Astrocyte of the cerebellum (primary cell): ENCODE measurements at regions of chr2 and their contacts with region 1.

Region 1: GRCh38 chr2:11863513-11864328 is 117.3 kb downstream of the LPIN1 start:
- DNase-seq: peak; percentile 96
- H3K4me3 ChIP-seq: no peak overlapping the region
- CTCF ChIP-seq: peak; percentile 98

Region 2: DNA sequence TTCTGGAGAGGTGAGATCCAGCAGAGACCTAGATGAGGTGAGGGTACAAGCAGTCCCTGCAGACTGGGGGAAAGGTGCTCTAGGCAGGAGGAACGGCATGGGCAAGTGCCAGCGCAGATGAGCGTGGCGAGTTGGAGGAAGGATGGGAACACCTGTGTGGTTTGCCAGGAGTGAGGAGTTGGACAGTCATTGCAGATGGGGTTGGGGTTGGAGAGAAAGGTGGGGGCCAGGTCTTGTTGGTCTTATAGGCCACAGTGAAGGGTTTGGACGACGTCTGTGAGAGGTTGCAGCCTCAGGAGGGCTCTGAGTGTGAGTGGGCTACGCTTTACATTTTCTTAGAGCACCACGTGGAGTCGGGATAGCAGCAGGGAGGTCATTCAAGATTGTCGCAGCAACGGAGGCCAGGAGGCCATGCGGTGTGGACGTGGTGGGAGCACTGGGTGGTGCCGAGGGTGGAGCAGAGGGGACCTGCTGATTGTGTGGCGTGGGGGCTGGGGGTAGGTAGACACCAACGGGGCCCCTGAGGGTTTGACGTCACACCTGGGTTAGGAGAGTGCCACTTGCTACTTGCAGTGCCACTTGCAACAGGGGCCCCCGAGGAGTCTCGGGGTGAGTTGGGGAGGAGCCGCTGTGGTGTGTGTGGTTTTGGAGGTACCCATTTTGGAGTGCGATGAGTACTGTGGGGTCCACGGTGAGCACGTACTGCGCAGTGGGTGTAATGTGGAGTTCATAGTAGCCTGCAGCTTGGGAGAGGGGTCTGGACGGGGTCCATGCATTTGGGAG is 51.1 kb before region 1 on chr2:
- in situ Hi-C with region 1: no loop called
- DNase-seq: no peak
- H3K4me3 ChIP-seq: no peak overlapping the region
- CTCF ChIP-seq: no peak

Region 3: GRCh38 chr2:12169721-12170120 is 306.0 kb after region 1 on chr2:
- in situ Hi-C with region 1: loop called (anchors 25 kb)
- DNase-seq: peak; percentile 60
- H3K4me3 ChIP-seq: no peak overlapping the region
- CTCF ChIP-seq: no peak

Region 4: GRCh38 chr2:12320991-12321641 is 457.4 kb after region 1 on chr2:
- in situ Hi-C with region 1: loop called (anchors 25 kb)
- DNase-seq: peak; percentile 94
- H3K4me3 ChIP-seq: no peak overlapping the region
- CTCF ChIP-seq: peak; percentile 8

Region 5: DNA sequence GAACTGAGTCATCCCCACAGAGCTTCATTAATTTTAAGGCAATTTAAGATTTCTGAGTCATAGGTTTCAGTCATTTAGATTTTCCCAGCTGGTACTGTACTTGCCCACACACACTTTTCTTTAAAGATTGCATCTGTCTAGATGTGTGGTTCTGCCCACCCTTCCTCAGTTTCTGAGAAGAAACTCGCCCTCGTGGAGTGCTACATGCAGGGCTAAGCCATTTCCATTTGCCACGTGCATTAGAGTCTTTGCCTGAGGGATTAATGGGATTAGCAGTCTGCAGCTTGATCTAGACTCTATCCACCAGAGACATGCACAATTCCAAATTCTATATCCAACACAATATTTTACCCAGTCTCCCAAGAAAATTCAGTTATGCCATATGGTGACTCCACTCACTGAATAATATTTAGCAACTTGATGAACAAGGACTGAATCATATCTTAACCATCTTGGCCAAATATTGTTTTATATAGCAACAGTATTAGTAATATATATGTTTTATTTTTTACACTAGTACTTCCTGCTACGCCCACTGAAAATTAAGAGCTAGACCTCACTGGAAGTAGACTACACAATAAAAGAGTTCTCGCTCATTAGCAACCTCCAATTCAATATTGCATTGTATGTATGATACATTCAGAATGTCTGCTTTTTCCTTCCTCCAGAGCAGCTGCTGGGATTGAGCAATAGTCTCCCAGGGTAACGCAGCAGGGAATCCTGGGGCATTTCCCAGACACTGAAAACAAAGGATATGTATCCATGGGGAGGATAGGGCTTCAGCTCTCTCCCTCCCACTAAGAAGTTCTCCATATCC is 838.8 kb after region 1 on chr2:
- in situ Hi-C with region 1: loop called (anchors 10 kb)
- DNase-seq: peak; percentile 83
- H3K4me3 ChIP-seq: no peak overlapping the region
- CTCF ChIP-seq: no peak

Region 6: GRCh38 chr2:13006829-13007717 is 1143.4 kb after region 1 on chr2:
- in situ Hi-C with region 1: loop called (anchors 25 kb)
- DNase-seq: peak; percentile 70
- H3K4me3 ChIP-seq: peak overlapping the region; percentile 18
- CTCF ChIP-seq: peak; percentile 74